H1 (cell line): ENCODE measurements at regions of chr10 and their contacts with region 1.

Region 1: DNA sequence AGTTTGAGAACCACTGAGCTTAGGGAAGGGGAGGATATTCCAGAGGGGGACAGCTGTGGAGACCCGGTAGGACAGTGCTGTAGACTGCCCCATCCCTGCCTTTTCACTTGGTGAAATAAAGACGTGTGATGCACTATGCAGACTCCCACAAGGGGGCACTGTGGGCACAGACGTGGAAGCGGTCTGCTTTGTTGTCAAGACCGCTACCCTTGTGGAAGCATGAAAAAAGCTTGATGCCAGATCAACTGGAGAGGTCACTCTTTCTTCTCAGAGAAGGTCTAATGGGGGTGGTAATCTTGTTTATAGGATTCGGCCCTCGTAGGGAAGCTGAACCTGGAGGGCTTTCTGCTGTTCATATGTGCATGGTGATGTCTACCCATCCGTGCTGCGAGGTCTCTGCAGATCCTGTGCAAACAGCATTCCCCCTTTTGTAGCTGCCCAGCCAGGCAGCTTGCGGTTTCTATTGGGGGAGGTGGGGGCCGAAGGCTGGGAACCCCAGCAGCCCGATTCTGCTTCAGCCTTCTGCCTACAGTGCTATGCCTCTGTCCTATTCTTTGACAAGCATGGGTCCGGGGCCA is 13.7 kb downstream of the RPS24 start:
- DNase-seq: peak; percentile 86 to 98
- H3K4me3 ChIP-seq: no peak overlapping the region
- H3K27ac ChIP-seq: no peak overlapping the region
- H3K4me1 ChIP-seq: peaks cover 4 to 5% (median 4%) of the 10 kb centered on the region in 4 experiments; a peak in 6 of 7 replicates
- H3K27me3 ChIP-seq: no peaks in the 10 kb centered on the region
- CTCF ChIP-seq: peak; percentile 87 to 98 (median 97)
- EP300 ChIP-seq: no peak
- POLR2A ChIP-seq: no peak
- RAD21 ChIP-seq: peak; percentile 98 to 99

Region 2: DNA sequence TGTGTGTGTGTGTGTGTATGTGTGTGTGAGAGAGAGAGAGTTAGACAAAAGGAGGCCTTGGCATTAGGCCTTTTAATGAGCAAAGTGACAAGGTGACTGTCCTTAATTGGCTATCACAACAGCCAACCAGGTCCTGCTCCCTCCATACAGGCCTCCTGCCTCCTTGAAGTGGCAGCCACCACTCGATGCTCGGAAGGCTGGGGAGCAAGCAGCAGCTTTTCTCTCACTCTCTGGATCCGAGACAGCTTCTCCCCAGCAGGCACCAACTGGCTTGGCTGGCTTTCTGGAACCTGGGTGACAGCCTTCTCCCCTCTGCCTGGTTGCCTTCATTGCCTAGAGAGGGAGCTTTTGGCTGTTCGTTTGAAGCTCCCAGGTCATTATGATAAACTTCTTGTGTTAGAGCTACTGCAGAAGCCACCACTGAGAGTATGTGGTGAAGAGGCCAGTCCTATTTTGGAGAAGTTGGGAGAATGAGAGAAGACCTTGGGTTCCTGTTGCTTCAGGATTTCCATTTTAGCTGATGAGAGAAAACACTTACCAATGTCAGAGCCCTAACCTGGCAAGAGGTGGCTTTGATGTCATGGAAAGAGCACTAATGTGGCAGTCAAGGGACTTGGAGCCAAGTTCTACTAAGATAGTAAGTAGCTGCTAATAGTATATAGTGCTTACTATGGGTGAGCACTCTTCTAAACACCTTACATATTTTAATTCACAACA is 23.9 kb after region 1 on chr10:
- CTCF ChIA-PET with region 1: interaction called, 17 read pairs
- POLR2A ChIA-PET with region 1: interaction called, 3 read pairs
- DNase-seq: no peak
- H3K4me3 ChIP-seq: no peak overlapping the region
- H3K27ac ChIP-seq: no peak overlapping the region
- H3K4me1 ChIP-seq: no peaks in the 10 kb centered on the region
- H3K27me3 ChIP-seq: no peaks in the 10 kb centered on the region
- CTCF ChIP-seq: no peak
- EP300 ChIP-seq: no peak
- POLR2A ChIP-seq: no peak
- RAD21 ChIP-seq: no peak

Region 3: DNA sequence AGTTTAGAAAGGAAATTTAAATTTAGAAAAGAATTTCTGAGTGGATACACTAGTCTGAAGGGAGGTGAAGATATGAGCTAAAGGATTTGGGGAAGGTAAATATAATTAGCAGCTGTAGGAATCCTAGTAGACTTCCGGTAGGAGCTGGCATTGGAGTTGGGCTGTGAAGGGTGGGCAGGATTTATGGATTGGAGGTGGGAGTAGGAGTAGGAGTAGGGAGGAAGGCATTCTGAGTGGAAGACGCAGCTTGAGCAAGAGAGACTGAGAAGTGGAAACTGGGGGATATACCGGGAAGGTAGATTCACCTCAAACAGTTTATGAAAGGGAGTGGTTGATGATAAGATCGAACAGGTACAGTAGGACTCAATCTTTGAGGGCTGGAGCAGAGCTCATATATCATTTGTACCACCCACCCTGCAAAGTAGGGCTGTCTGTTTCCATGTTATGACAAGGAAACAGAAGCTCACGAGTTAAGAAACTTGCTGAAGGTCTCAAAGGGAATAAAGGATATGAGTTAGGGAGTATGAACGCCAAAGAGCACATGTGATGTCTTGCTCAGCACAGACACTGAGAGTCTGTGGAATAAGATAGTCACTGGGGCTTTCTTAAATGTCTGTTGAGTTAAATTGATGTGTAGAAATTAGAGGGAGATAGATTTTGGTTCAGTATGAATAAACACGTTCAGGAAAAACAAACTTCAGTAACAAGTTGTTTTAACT is 67.9 kb after region 1 on chr10:
- CTCF ChIA-PET with region 1: interaction called, 28 read pairs
- POLR2A ChIA-PET with region 1: interaction called, 5 read pairs
- DNase-seq: no peak
- H3K4me3 ChIP-seq: no peak overlapping the region
- H3K27ac ChIP-seq: no peak overlapping the region
- H3K4me1 ChIP-seq: no peaks in the 10 kb centered on the region
- H3K27me3 ChIP-seq: no peaks in the 10 kb centered on the region; a peak in 2 of 7 replicates
- CTCF ChIP-seq: no peak
- EP300 ChIP-seq: no peak
- POLR2A ChIP-seq: no peak
- RAD21 ChIP-seq: no peak

Region 4: DNA sequence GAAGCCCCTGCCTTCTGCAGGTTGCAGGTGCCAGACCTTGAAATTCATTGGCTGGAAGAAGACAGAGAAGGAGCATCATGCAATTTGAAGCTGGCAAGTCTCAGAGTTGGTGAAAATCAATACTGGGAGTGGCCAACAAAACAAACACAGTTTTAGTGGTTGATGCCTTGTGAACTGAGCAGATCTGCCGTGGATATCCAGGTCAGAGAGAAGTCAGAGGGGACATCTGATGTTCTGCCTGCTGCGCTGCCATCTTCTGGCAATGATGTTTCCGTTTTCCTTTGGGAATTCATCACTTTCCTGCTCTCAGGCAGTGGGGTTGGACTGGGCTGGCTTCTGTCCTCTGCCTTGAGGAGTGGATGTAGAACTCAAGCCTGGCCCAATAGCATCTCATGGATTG is 118.2 kb after region 1 on chr10:
- CTCF ChIA-PET with region 1: interaction called, 80 read pairs
- POLR2A ChIA-PET with region 1: interaction called, 3 read pairs
- DNase-seq: no peak
- H3K4me3 ChIP-seq: no peak overlapping the region
- H3K27ac ChIP-seq: no peak overlapping the region
- H3K4me1 ChIP-seq: no peaks in the 10 kb centered on the region; a peak in 1 of 7 replicates
- H3K27me3 ChIP-seq: no peaks in the 10 kb centered on the region
- CTCF ChIP-seq: peak; percentile 50 to 70 (median 62)
- EP300 ChIP-seq: no peak
- POLR2A ChIP-seq: no peak
- RAD21 ChIP-seq: peak; percentile 69 to 80

Region 5: DNA sequence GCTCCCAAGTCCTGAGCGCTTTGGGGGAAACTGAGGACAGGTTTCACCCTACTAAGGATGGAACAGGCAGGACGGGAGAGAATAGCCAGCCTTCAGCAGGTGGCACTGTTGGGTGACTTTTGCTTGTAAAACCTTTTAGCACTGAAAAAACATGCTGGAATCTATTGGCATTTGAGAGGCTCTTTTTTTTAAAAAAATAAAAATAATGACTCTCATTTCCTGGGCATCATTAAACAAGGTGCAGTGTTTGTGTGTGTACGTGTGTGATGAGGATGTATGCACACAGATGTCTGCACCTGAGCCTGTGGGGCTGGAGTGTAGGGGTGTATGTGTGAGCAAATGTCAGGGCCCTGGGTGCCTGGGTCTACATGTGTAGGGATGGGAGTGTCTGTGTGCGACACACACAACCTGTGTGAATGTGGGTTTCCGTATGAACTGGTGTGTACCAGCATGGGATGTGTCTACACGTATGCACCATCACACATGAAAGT is 164.2 kb after region 1 on chr10:
- CTCF ChIA-PET with region 1: interaction called, 17 read pairs
- POLR2A ChIA-PET with region 1: interaction called, 4 read pairs
- DNase-seq: no peak
- H3K4me3 ChIP-seq: no peak overlapping the region
- H3K27ac ChIP-seq: no peak overlapping the region
- H3K4me1 ChIP-seq: no peaks in the 10 kb centered on the region; a peak in 1 of 7 replicates
- H3K27me3 ChIP-seq: no peaks in the 10 kb centered on the region
- CTCF ChIP-seq: peak; percentile 46 to 53 (median 47)
- EP300 ChIP-seq: no peak
- POLR2A ChIP-seq: no peak
- RAD21 ChIP-seq: peak; percentile 69 to 74

Region 6: DNA sequence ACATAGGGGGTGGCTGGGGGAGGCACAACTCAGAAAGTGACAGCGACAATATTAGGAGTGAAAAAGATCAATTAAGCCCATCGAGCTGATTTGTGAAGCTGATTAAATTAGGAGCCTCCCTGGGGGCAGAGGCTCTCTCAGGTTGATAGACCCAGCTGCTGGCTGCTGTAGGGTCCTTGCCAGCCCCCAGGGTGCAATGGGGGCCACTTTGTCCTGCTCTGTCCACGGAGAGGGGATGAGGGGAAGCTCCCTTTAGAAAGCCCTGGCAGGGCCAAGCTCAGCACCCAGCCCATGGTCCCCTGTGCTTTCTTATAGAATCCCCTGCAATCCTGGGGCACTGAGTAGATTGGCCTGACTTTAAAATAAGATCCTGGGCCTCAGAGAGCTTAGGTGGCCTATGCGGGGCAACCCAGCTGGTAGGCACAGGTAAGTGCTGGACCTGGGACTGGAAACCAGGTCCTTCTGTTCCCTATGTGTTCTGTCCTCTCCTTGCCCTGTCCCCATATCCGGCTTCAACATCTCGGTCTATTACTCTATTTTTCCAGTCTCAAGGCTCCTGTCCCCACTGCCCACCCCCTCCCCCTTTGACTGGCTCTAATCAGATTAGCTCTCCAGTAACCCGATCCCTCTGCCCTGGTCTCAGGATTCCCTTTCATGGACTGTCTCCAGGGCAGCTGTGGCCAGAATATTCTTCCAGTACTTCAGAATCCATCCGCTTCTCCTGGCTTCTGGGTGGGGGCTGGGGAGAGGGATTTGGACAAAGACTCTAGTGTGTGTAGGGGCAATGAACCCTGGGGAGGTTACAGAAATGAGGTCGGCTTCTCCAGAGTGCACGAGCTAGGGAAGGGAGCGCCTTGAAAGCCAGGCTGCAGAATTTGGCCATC is 245.8 kb after region 1 on chr10:
- CTCF ChIA-PET with region 1: interaction called, 13 read pairs
- POLR2A ChIA-PET with region 1: no interaction called
- DNase-seq: no peak
- H3K4me3 ChIP-seq: peak overlapping the region in 1 of 4 experiments; percentile 11; a peak in 1 of 8 replicates
- H3K27ac ChIP-seq: no peak overlapping the region
- H3K4me1 ChIP-seq: peaks cover 3 to 12% (median 8%) of the 10 kb centered on the region in 4 experiments; a peak in 5 of 7 replicates
- H3K27me3 ChIP-seq: peaks cover 0 to 4% (median 0%) of the 10 kb centered on the region in 4 experiments; a peak in 1 of 7 replicates
- CTCF ChIP-seq: no peak
- EP300 ChIP-seq: no peak
- POLR2A ChIP-seq: no peak
- RAD21 ChIP-seq: no peak